K562 (cell line): ENCODE measurements at regions of chrX and their contacts with region 1.

Region 1: GRCh38 chrX:135697601-135698000 is 15.8 kb upstream of the CT45A1 start:
- DNase-seq: peak in 1 of 4 experiments; percentile 3
- ATAC-seq: no peak
- H3K4me3 ChIP-seq: no peak overlapping the region
- H3K27ac ChIP-seq: no peak overlapping the region
- H3K4me1 ChIP-seq: no peaks in the 10 kb centered on the region
- H3K27me3 ChIP-seq: peaks cover 0 to 5% of the 10 kb centered on the region in 2 experiments; a peak in 2 of 5 replicates
- CTCF ChIP-seq: peak in 2 of 3 experiments; percentile 10 to 28; a peak in 3 of 6 replicates
- EP300 ChIP-seq: no peak
- POLR2A ChIP-seq: no peak
- RAD21 ChIP-seq: peak in 1 of 2 experiments; percentile 52; a peak in 2 of 4 replicates

Region 2: DNA sequence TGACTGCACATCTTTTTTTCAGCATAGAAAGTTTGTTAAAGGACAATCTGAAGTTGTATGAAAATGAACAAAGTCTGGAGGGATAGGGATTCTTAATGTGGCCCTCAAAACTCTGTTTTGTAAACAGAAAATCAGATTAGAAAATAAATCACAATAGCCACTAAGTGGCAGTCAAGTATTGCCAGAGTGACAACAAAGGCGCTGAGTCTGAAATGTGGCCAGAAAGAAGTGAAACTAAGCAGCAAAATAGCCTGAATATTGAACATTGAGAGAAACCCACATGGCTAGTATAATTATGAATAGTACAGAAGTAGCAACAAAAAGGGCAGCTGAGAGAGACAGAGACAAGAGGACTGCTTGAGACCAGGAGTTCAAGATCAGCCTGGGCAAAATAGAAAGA is 65.2 kb before region 1 on chrX:
- CTCF ChIA-PET with region 1: no interaction called
- POLR2A ChIA-PET with region 1: no interaction called
- in situ Hi-C with region 1: no loop called
- intact Hi-C with region 1: loop called (anchors 10 kb)
- DNase-seq: no peak
- ATAC-seq: no peak
- H3K4me3 ChIP-seq: no peak overlapping the region
- H3K27ac ChIP-seq: no peak overlapping the region
- H3K4me1 ChIP-seq: no peaks in the 10 kb centered on the region
- H3K27me3 ChIP-seq: no peaks in the 10 kb centered on the region
- CTCF ChIP-seq: peak in 2 of 3 experiments; percentile 12 to 33; a peak in 3 of 6 replicates
- EP300 ChIP-seq: no peak
- POLR2A ChIP-seq: no peak
- RAD21 ChIP-seq: peak in 1 of 2 experiments; percentile 29; a peak in 1 of 4 replicates